ENCODE measurements at regions of chr3 and their contacts with region 1.

Region 1: GRCh38 chr3:139935016-139935865 is at the start of gene CLSTN2:
- DNase-seq: peak; percentile 87 to 96 (median 92)
- ATAC-seq: peak; percentile 92
- H3K4me3 ChIP-seq: peak within 1 kb of the TSS; percentile 54
- H3K27ac ChIP-seq: no peak within 1 kb of the TSS
- H3K4me1 ChIP-seq: peaks cover 2% of the 10 kb centered on the region
- H3K27me3 ChIP-seq: no peaks in the 10 kb centered on the region
- total RNA-seq, gene CLSTN2: 19.3 to 31.5 (median 26.2) TPM

Region 2: GRCh38 chr3:139427283-139427993 is 507.8 kb before region 1 on chr3:
- intact Hi-C with region 1: loop called in 2 of 4 experiments (anchors 10 kb)
- DNase-seq: no peak
- ATAC-seq: peak; percentile 81 to 87
- H3K4me3 ChIP-seq: no peak overlapping the region
- H3K27ac ChIP-seq: no peak overlapping the region
- H3K4me1 ChIP-seq: no peaks in the 10 kb centered on the region
- H3K27me3 ChIP-seq: no peaks in the 10 kb centered on the region

Region 3: DNA sequence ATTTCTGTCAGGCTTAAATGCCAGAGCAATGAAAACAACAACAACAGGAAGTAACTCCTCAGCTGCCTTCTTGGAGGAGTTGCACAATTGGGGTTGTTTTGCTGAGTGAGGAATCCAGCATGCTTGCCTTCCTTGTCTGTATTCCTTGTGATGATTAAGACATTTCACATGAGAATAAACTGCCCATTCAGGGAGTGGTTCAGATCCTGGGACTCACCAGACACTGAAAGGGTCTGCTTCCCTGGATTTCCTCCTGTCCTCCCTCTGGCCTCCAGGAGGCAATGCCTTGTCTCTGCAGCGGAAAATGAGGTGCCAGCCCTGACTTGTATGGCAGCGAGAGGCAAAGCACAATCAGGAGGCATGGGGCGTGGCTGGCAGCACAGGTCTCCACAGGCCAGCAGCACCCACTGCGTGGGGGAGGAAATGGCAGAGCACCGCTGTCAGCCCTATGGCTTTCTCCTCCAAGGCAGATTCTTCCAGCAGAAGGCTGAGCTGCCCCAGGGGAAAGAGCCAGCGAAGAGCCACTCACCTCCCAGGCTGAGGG is 500.4 kb before region 1 on chr3:
- intact Hi-C with region 1: loop called in 1 of 4 experiments (anchors 10 kb)
- DNase-seq: peak in 1 of 3 donors; percentile 62
- ATAC-seq: peak; percentile 53 to 62
- H3K4me3 ChIP-seq: no peak overlapping the region
- H3K27ac ChIP-seq: peak overlapping the region; percentile 8
- H3K4me1 ChIP-seq: peaks cover 4% of the 10 kb centered on the region
- H3K27me3 ChIP-seq: no peaks in the 10 kb centered on the region

Region 4: DNA sequence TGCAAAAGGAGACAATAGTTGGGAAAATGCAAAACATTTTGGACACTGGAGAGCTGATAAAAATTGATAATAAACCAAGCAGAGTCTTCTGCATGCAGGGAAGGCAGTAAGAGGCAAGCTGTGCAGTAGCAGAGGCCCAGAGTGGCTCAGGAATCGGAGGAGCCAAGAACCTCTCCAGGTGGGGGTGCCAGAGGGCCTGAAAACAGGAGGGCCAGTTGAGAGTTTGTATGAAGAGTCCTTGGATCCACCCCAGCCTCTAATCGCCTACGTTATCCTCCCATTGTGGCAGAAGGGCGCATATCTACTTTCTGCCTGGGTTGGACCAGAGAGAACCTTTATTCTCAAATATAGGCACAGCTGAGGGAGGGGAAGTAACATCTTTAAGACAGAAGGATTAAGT is 346.8 kb before region 1 on chr3:
- intact Hi-C with region 1: loop called in 2 of 4 experiments (anchors 10 kb)
- DNase-seq: no peak
- ATAC-seq: peak; percentile 42 to 62
- H3K4me3 ChIP-seq: no peak overlapping the region
- H3K27ac ChIP-seq: no peak overlapping the region
- H3K4me1 ChIP-seq: peaks cover 2% of the 10 kb centered on the region
- H3K27me3 ChIP-seq: no peaks in the 10 kb centered on the region

Region 5: GRCh38 chr3:140736863-140737460 is 801.7 kb after region 1 on chr3:
- intact Hi-C with region 1: loop called in 2 of 4 experiments (anchors 10 kb)
- DNase-seq: peak; percentile 59 to 86 (median 73)
- ATAC-seq: peak; percentile 56 to 82
- H3K4me3 ChIP-seq: no peak overlapping the region
- H3K27ac ChIP-seq: no peak overlapping the region
- H3K4me1 ChIP-seq: no peaks in the 10 kb centered on the region
- H3K27me3 ChIP-seq: no peaks in the 10 kb centered on the region

Region 6: GRCh38 chr3:140863580-140864009 is 928.4 kb after region 1 on chr3:
- intact Hi-C with region 1: loop called in 1 of 4 experiments (anchors 5 kb)
- DNase-seq: peak in 1 of 3 donors; percentile 55
- ATAC-seq: peak; percentile 45 to 55
- H3K4me3 ChIP-seq: no peak overlapping the region
- H3K27ac ChIP-seq: no peak overlapping the region
- H3K4me1 ChIP-seq: no peaks in the 10 kb centered on the region
- H3K27me3 ChIP-seq: no peaks in the 10 kb centered on the region

Measured in right cardiac atrium (tissue), 5 donors.